Prostate gland (tissue), 2 donors: ENCODE measurements at regions of chr12 and their contacts with region 1.

Region 1: GRCh38 chr12:42325653-42326474 is at the starts of genes PPHLN1 and ZCRB1:
- DNase-seq: peak; percentile 84
- H3K4me3 ChIP-seq: peak within 1 kb of the TSS; percentile 50 to 51
- H3K27ac ChIP-seq: peak within 1 kb of the TSS; percentile 83 to 87
- H3K4me1 ChIP-seq: peaks cover 8% of the 10 kb centered on the region
- H3K27me3 ChIP-seq: no peaks in the 10 kb centered on the region
- CTCF ChIP-seq: peak in 2 of 4 experiments; percentile 9 to 16
- POLR2A ChIP-seq: peak; percentile 56
- total RNA-seq, gene PPHLN1: 52.1 to 54.7 TPM
- total RNA-seq, gene ZCRB1: 31.4 to 49.7 TPM

Region 2: DNA sequence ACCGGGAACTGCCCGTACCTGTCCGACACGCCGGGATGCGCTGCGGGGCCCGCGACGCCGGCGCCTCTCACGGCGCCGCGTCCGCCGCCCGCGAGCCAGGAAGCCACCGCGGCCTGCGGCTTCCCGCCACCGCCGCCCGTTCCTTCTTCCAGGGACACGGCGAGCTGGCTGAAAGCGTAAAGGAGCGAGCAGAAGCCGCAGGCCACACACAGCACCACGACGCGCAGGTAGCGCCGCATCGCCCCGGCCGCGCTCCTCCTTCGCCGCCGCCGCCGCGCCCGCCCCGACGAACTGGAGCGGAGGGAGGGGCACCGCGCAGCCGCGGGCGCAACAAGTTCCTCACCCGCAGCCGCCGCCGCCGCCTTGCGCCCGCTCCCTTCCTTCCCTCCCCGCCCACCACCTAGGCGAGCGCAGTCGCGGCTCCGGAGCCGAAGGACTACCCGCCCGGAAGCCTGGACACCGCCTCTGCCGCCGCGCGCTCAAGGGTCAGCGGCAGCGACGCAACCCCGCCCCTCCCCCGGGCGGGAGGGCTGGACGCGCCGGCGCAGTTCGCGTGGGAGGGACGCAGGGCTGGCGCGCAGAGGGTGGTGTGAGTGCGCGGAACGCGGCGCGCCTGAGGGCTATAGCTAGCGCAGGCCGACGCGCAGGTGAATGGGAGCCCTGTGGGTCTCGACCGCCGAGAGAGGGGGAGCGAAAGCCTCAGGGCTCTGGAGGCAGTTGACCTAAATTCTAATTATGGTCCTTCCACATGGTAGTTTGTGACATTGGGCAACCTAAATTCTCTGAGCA is 181.3 kb before region 1 on chr12 and contains the start of gene GXYLT1:
- intact Hi-C with region 1: loop called (anchors 5 kb)
- DNase-seq: peak; percentile 90
- H3K4me3 ChIP-seq: peak within 1 kb of the TSS; percentile 78 to 93
- H3K27ac ChIP-seq: peak within 1 kb of the TSS; percentile 78 to 91
- H3K4me1 ChIP-seq: no peaks in the 10 kb centered on the region
- H3K27me3 ChIP-seq: no peaks in the 10 kb centered on the region
- CTCF ChIP-seq: peak in 1 of 4 experiments; percentile 19
- POLR2A ChIP-seq: peak; percentile 88
- total RNA-seq, gene GXYLT1: 15.7 to 18.0 TPM

Region 3: DNA sequence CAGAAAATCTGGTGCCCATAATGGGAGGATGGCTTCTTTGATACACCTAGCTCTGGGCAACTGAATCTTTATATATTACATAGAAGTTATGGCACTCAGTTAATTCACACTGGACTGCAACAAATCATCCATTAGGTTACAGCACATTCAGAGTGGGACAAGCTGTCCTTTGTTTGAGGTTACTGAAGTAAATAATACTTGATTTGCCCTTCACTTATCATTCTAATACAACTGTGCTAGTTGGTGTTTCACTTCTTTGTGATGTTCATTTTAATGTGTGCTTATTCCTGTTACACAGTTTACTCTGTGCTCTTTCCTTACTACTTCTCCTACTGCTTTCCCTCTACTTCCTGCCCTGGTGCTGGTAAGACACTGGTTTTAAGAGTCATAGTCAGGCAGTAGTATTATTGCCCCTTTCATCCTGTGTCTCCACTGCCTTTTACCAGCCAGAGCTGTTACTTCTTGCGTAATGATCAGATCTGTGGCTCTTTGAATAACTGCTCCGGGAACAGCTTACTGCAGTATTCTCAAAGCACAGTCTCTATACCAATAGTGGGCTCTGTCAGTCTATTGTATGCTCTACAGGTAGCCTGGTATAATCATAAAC is 144.8 kb before region 1 on chr12:
- intact Hi-C with region 1: no loop called
- DNase-seq: no peak
- H3K4me3 ChIP-seq: no peak overlapping the region
- H3K27ac ChIP-seq: no peak overlapping the region
- H3K4me1 ChIP-seq: no peaks in the 10 kb centered on the region
- H3K27me3 ChIP-seq: no peaks in the 10 kb centered on the region
- CTCF ChIP-seq: no peak
- POLR2A ChIP-seq: no peak